Heart left ventricle (tissue), 16 donors: ENCODE measurements at regions of chr10 and their contacts with region 1.

Region 1: GRCh38 chr10:114525368-114525949 is 121.2 kb upstream of the AFAP1L2 start:
- DNase-seq: no peak
- ATAC-seq: peak in 2 of 4 donors; percentile 2 to 24
- H3K4me3 ChIP-seq: peak overlapping the region in 10 of 12 donors; percentile 33 to 60 (median 51)
- H3K27ac ChIP-seq: peak overlapping the region in 10 of 12 donors; percentile 53 to 86 (median 72)
- H3K4me1 ChIP-seq: peaks cover 5 to 86% (median 64%) of the 10 kb centered on the region in 12 donors
- H3K27me3 ChIP-seq: no peaks in the 10 kb centered on the region
- CTCF ChIP-seq: no peak
- POLR2A ChIP-seq: no peak

Region 2: GRCh38 chr10:114477285-114477684 is 48.2 kb before region 1 on chr10:
- intact Hi-C with region 1: loop called in 2 of 10 experiments (anchors 2 to 5 kb)
- DNase-seq: peak in 1 of 5 donors; percentile 45
- ATAC-seq: peak; percentile 36 to 68 (median 56)
- H3K4me3 ChIP-seq: no peak overlapping the region
- H3K27ac ChIP-seq: peak overlapping the region in 11 of 12 donors; percentile 21 to 81 (median 54)
- H3K4me1 ChIP-seq: peaks cover 0 to 89% (median 43%) of the 10 kb centered on the region in 12 donors
- H3K27me3 ChIP-seq: no peaks in the 10 kb centered on the region
- CTCF ChIP-seq: no peak
- POLR2A ChIP-seq: peak in 1 of 2 donors; percentile 13